GM12878 (cell line): ENCODE measurements at regions of chr9 and their contacts with region 1.

Region 1: DNA sequence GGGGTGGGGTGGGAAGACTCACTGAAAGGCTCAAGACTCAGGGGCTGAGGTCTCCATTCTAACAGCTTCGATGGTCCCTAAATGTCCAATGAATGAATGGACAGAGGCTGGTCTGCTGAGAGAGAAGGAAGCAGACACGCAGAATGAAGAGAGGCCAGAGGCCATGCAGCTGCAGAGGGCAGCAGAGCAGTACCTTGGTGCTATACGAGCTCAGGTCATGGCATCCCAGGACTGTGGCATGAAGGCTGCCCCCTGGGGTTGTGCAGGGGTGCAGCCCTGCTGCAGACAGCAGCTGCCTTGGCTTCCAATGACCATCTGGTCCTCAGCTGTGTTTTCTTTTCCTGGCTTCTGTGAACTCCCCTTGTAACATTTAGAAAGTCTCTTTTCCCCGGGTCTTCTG is 15.2 kb upstream of the CORO2A start:
- DNase-seq: no peak
- ATAC-seq: no peak
- H3K4me3 ChIP-seq: no peak overlapping the region
- H3K27ac ChIP-seq: no peak overlapping the region
- H3K4me1 ChIP-seq: no peaks in the 10 kb centered on the region; the same call in 1 of the 2 replicates
- H3K27me3 ChIP-seq: no peaks in the 10 kb centered on the region; a peak in 1 of 4 replicates
- CTCF ChIP-seq: no peak
- EP300 ChIP-seq: no peak
- POLR2A ChIP-seq: no peak
- RAD21 ChIP-seq: no peak

Region 2: DNA sequence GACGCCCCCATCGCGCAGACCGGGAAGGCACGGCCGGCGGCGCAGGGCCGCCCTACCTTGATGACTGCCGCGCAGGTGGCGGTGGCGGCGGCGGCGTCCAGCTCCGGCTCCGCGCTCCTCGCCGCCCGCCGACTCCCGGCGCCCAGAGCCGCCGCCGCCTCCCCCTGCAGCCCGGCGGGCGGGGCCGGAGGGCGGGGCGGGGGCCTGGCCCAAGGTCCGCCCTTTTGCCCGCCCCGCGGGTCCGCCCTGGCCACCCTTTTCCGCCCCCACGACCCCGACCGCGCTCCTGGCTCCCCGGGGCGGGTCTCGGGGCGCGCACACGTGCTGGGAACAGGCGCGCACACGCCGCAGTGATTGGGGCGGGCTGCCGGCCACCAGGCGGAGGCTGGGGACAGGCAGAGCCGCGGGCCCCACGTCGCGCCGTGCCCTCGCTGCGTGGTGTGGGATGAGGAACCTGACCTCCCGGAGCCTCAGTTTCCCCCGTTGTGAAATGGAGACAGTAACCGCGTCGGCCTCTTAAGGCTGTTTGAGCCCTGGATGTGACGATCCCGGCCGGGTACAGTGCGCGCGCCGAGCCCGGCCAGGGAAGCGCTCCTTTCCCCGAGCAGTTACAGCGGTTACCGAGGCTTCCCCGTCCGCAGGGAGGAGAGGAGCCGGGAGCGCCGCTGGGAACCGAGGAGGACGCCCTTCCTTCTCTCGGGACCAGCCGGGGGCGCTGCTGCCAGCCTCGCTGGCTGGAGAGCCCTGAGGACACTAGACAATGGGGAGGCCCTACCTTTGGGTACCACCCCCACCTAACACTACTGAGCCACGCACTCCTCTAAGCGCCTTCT is 14.9 kb before region 1 on chr9 and contains the start of gene CORO2A:
- CTCF ChIA-PET with region 1: interaction called, 25 read pairs
- POLR2A ChIA-PET with region 1: no interaction called
- RAD21 ChIA-PET with region 1: interaction called, 6 read pairs
- SMC1A ChIA-PET with region 1: interaction called, 22 read pairs
- in situ Hi-C with region 1: no loop called
- intact Hi-C with region 1: no loop called
- DNase-seq: no peak
- ATAC-seq: peak; percentile 87
- H3K4me3 ChIP-seq: peak within 1 kb of the TSS; percentile 78
- H3K27ac ChIP-seq: no peak within 1 kb of the TSS
- H3K4me1 ChIP-seq: peaks cover 6% of the 10 kb centered on the region
- H3K27me3 ChIP-seq: peaks cover 0 to 3% of the 10 kb centered on the region in 2 experiments; a peak in 3 of 4 replicates
- CTCF ChIP-seq: peak; percentile 40 to 43 (median 42)
- EP300 ChIP-seq: no peak
- POLR2A ChIP-seq: peak; percentile 69
- RAD21 ChIP-seq: 0 out of 2 replicates have a peak, but pooled peaks have one; percentile 21
- polyA plus RNA-seq, gene CORO2A: 1.7 to 1.9 TPM

Region 3: DNA sequence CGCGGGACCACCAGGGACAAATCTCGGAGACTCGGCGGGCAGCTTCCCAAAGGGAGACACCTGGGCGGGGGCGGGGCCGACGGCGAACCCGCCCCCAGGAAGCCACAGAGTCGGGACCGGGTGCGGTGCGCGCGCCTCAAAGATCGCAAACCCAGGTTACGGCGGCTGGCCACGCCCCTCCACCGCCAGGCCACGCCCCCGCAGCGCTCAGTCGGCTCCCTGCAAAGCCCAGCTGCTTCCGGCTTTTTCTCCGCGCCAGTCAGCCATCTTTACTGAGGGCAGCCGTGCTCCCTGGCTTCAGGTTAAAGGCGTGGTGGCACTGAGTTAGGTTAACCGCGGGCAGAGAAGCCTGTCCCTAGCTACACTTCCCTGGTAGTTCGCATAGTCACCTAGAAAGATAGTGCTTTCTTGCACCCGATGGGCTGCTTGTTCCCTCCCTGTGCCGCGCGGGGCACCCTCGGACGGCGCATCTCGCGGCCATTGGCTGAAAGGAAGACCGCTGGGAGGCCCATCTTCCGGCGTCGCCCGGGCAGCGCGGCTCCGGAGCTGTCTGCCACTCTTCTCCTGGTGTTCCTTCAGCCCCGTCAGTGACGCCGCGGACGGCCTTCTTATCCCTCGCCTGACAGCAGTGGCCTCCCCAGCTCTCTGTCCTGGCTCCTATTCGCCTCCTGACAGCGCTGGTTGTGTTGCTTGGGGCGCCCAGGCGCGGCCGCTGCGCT is 48.1 kb after region 1 on chr9 and contains the start of gene TBC1D2:
- CTCF ChIA-PET with region 1: interaction called, 24 read pairs
- POLR2A ChIA-PET with region 1: interaction called, 3 read pairs
- RAD21 ChIA-PET with region 1: interaction called, 7 read pairs
- SMC1A ChIA-PET with region 1: interaction called, 8 read pairs
- in situ Hi-C with region 1: no loop called
- intact Hi-C with region 1: no loop called
- DNase-seq: peak; percentile 85
- ATAC-seq: peak; percentile 94
- H3K4me3 ChIP-seq: peak within 1 kb of the TSS; percentile 75
- H3K27ac ChIP-seq: peak within 1 kb of the TSS; percentile 93
- H3K4me1 ChIP-seq: peaks cover 4% of the 10 kb centered on the region
- H3K27me3 ChIP-seq: no peaks in the 10 kb centered on the region
- CTCF ChIP-seq: peak; percentile 15 to 28 (median 21); a peak in 2 of 6 replicates
- EP300 ChIP-seq: no peak
- POLR2A ChIP-seq: peak; percentile 92
- RAD21 ChIP-seq: no peak
- polyA plus RNA-seq, gene TBC1D2: 0.04 to 0.06 TPM

Region 4: DNA sequence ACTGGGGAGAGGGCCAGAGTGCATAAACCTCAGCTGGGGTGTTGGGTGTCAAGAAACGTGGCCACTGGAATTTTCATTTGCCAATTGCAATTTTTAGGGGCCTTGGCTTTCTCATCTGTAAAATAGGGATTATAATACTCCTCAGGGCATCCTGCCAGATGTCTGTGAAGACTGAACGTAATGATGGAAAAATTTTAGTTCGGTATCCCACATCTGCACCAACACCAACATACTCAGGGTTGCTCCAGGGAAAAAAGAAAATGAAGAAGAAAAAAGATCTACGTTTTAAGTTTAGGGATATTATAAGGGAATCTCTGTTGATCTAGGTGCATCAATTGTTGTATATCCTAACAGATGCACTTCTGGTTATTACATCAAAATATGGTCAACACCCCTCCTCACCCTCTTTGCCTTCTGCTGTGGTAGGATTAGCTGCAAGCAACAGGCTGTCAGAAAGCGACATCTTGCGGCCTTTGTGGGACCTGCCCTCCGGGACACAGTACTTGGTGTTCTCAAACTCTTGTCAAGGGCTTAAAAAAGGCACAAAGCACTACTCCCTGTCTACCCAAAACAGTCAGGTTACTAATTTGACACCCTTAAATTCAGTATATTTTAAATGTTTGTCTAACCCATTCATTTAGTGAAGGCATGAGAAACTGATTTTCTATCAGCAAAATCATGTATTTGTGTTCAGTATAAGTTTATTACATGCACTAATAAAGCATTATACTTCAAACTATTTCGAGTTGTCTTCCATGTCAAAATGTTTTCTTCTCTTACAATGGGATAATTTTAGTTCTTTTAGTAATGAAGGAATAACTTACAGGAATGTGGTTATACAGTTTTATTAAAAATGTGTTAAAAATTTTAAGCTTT is 56.1 kb after region 1 on chr9:
- CTCF ChIA-PET with region 1: interaction called, 39 read pairs
- POLR2A ChIA-PET with region 1: no interaction called
- RAD21 ChIA-PET with region 1: interaction called, 8 read pairs
- SMC1A ChIA-PET with region 1: interaction called, 23 read pairs
- in situ Hi-C with region 1: no loop called
- intact Hi-C with region 1: loop called (anchors 1 kb)
- DNase-seq: peak; percentile 40
- ATAC-seq: peak; percentile 100
- H3K4me3 ChIP-seq: no peak overlapping the region
- H3K27ac ChIP-seq: no peak overlapping the region
- H3K4me1 ChIP-seq: no peaks in the 10 kb centered on the region
- H3K27me3 ChIP-seq: no peaks in the 10 kb centered on the region
- CTCF ChIP-seq: peak; percentile 91 to 95 (median 93)
- EP300 ChIP-seq: no peak
- POLR2A ChIP-seq: no peak
- RAD21 ChIP-seq: peak; percentile 99

Region 5: GRCh38 chr9:98280574-98280973 is 73.0 kb after region 1 on chr9:
- CTCF ChIA-PET with region 1: no interaction called
- POLR2A ChIA-PET with region 1: no interaction called
- RAD21 ChIA-PET with region 1: no interaction called
- SMC1A ChIA-PET with region 1: no interaction called
- in situ Hi-C with region 1: no loop called
- intact Hi-C with region 1: no loop called
- DNase-seq: no peak
- ATAC-seq: no peak
- H3K4me3 ChIP-seq: no peak overlapping the region
- H3K27ac ChIP-seq: no peak overlapping the region
- H3K4me1 ChIP-seq: no peaks in the 10 kb centered on the region
- H3K27me3 ChIP-seq: peaks cover 3 to 4% of the 10 kb centered on the region in 2 experiments; a peak in 2 of 4 replicates
- CTCF ChIP-seq: no peak
- EP300 ChIP-seq: no peak
- POLR2A ChIP-seq: no peak
- RAD21 ChIP-seq: no peak